ENCODE measurements at regions of chr5 and their contacts with region 1.

Region 1: GRCh38 chr5:76782444-76782843 is 36.4 kb upstream of the F2RL1 start:
- DNase-seq: no peak
- H3K4me3 ChIP-seq: no peak overlapping the region
- H3K27ac ChIP-seq: no peak overlapping the region
- H3K4me1 ChIP-seq: no peaks in the 10 kb centered on the region
- H3K27me3 ChIP-seq: no peaks in the 10 kb centered on the region
- CTCF ChIP-seq: no peak
- EP300 ChIP-seq: no peak
- POLR2A ChIP-seq: no peak

Region 2: GRCh38 chr5:75214928-75215327 is 1567.5 kb before region 1 on chr5:
- intact Hi-C with region 1: loop called in 1 of 4 experiments (anchors 5 kb)
- DNase-seq: no peak
- H3K4me3 ChIP-seq: no peak overlapping the region
- H3K27ac ChIP-seq: no peak overlapping the region
- H3K4me1 ChIP-seq: no peaks in the 10 kb centered on the region
- H3K27me3 ChIP-seq: no peaks in the 10 kb centered on the region
- CTCF ChIP-seq: no peak
- EP300 ChIP-seq: no peak
- POLR2A ChIP-seq: no peak